Panc1 (cell line): ENCODE measurements at regions of chr10 and their contacts with region 1.

Region 1: GRCh38 chr10:6176691-6177231 is 26.0 kb upstream of the PFKFB3 start:
- DNase-seq: no peak
- ATAC-seq: peak; percentile 22; the same call in 1 of the 2 replicates
- H3K4me3 ChIP-seq: no peak overlapping the region
- H3K27ac ChIP-seq: no peak overlapping the region
- H3K4me1 ChIP-seq: no peaks in the 10 kb centered on the region
- H3K27me3 ChIP-seq: no peaks in the 10 kb centered on the region
- CTCF ChIP-seq: no peak

Region 2: DNA sequence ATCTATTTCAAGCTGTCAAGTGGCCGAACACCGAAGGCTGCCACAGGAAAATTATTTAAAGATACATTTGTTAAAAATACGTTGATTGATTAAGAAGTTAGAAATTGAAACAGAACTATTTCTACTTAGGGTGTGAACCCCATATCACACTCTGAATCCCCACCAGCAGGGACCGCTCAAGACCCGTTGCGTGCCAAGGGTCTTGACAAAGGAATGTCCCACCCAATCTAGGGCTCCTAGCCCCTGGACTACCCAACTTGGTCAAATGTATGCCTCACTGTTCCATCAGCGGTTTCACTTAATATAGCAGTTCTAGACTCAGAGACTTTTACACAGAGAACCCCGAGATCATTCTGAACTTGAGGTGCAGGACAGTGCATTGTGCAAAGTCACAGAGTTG is 14.4 kb after region 1 on chr10:
- CTCF ChIA-PET with region 1: no interaction called
- POLR2A ChIA-PET with region 1: interaction called, 14 read pairs
- in situ Hi-C with region 1: no loop called
- intact Hi-C with region 1: no loop called
- DNase-seq: no peak
- ATAC-seq: no peak
- H3K4me3 ChIP-seq: no peak overlapping the region
- H3K27ac ChIP-seq: no peak overlapping the region
- H3K4me1 ChIP-seq: no peaks in the 10 kb centered on the region; the same call in 1 of the 2 replicates
- H3K27me3 ChIP-seq: no peaks in the 10 kb centered on the region
- CTCF ChIP-seq: no peak